CD4-positive, alpha-beta T cell (primary cell): ENCODE measurements at regions of chr17 and their contacts with region 1.

Region 1: GRCh38 chr17:49851387-49852291 is 3.8 kb upstream of the TAC4 start:
- DNase-seq: peak; percentile 61 to 83 (median 69)
- ATAC-seq: peak; percentile 81
- H3K4me3 ChIP-seq: peak overlapping the region; percentile 82
- H3K4me3 Mint-ChIP-seq: peak overlapping the region; percentile 96
- H3K27ac ChIP-seq: peak overlapping the region; percentile 16 to 69
- H3K27ac Mint-ChIP-seq: peak overlapping the region; percentile 89
- H3K4me1 ChIP-seq: peaks cover 18% of the 10 kb centered on the region
- H3K4me1 Mint-ChIP-seq: peaks cover 22% of the 10 kb centered on the region
- H3K27me3 ChIP-seq: no peaks in the 10 kb centered on the region
- H3K27me3 Mint-ChIP-seq: no peaks in the 10 kb centered on the region
- CTCF ChIP-seq: peak; percentile 78

Region 2: DNA sequence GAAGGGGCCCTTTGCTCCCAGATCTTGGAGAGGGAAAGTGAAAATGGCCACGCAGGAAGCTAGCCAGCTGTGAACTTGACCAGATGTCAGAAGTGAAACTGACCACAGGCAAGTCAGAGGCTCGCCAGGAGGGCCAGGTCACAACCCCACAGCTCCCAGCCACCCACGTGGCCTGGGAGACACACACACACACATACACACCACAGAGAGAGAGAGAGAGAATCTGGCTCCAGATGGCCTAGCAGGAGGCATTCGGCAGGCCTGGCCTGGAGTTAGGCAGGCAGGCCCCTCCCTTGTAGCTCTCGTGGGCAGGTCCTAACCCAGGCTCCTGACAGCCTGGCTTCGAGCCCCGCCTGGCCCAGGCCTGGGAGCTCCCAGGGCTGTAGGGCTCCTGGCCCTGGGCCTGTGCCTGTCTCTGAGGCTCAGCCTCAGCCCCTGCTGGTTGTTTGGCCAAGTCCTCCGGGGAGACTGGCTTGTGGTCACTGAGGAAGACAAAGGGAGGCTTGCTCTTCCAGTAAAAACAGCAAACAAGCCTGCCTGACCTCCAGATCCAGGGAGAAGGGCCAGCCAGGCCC is 336.4 kb before region 1 on chr17:
- CTCF ChIA-PET with region 1: no interaction called
- POLR2A ChIA-PET with region 1: no interaction called
- intact Hi-C with region 1: no loop called
- DNase-seq: peak in 2 of 14 experiments; percentile 19 to 32
- ATAC-seq: no peak
- H3K4me3 ChIP-seq: no peak overlapping the region
- H3K4me3 Mint-ChIP-seq: no peak overlapping the region
- H3K27ac ChIP-seq: no peak overlapping the region
- H3K27ac Mint-ChIP-seq: no peak overlapping the region
- H3K4me1 ChIP-seq: peaks cover 3% of the 10 kb centered on the region
- H3K4me1 Mint-ChIP-seq: no peaks in the 10 kb centered on the region
- H3K27me3 ChIP-seq: no peaks in the 10 kb centered on the region
- H3K27me3 Mint-ChIP-seq: peaks cover 8% of the 10 kb centered on the region
- CTCF ChIP-seq: no peak

Region 3: DNA sequence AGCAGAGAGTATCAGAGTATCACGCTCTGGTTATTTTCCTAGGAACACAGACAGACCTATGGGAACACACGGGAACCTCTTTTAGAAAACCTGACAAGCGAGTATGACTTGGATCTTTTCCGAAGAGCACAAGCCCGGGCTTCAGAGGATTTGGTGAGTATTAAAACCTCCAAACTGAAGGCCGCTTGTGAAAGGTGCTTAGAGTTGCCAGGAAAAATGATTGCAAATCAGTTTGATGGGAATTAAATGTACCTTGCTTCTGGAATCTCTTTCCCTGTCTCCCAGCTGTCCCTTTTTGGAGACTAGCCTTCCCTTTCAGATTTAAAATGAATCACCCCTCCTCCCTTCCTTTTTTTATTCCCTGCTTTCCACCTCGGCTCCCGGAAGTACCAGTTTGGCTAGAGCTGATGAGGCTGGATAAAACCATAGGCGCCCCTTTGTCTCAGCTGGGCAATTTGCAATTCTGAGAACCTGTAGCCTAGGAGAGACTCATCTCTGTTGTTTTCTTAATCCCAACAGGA is 35.8 kb before region 1 on chr17:
- CTCF ChIA-PET with region 1: no interaction called
- POLR2A ChIA-PET with region 1: interaction called, 10 read pairs
- intact Hi-C with region 1: loop called in 1 of 2 experiments (anchors 2 kb)
- DNase-seq: no peak
- ATAC-seq: no peak
- H3K4me3 ChIP-seq: no peak overlapping the region
- H3K4me3 Mint-ChIP-seq: no peak overlapping the region
- H3K27ac ChIP-seq: peak overlapping the region in 1 of 2 donors; percentile 43
- H3K27ac Mint-ChIP-seq: peak overlapping the region; percentile 96
- H3K4me1 ChIP-seq: peaks cover 51% of the 10 kb centered on the region
- H3K4me1 Mint-ChIP-seq: peaks cover 73% of the 10 kb centered on the region
- H3K27me3 ChIP-seq: no peaks in the 10 kb centered on the region
- H3K27me3 Mint-ChIP-seq: no peaks in the 10 kb centered on the region
- CTCF ChIP-seq: no peak

Region 4: GRCh38 chr17:49873466-49873865 is 21.8 kb after region 1 on chr17:
- CTCF ChIA-PET with region 1: no interaction called
- POLR2A ChIA-PET with region 1: no interaction called
- intact Hi-C with region 1: no loop called
- DNase-seq: no peak
- ATAC-seq: no peak
- H3K4me3 ChIP-seq: no peak overlapping the region
- H3K4me3 Mint-ChIP-seq: no peak overlapping the region
- H3K27ac ChIP-seq: no peak overlapping the region
- H3K27ac Mint-ChIP-seq: no peak overlapping the region
- H3K4me1 ChIP-seq: peaks cover 18% of the 10 kb centered on the region
- H3K4me1 Mint-ChIP-seq: peaks cover 20% of the 10 kb centered on the region
- H3K27me3 ChIP-seq: peaks cover 0 to 4% of the 10 kb centered on the region in 2 experiments
- H3K27me3 Mint-ChIP-seq: peaks cover 13% of the 10 kb centered on the region
- CTCF ChIP-seq: no peak

Region 5: GRCh38 chr17:49959183-49959935 is 107.7 kb after region 1 on chr17:
- CTCF ChIA-PET with region 1: no interaction called
- POLR2A ChIA-PET with region 1: no interaction called
- intact Hi-C with region 1: no loop called
- DNase-seq: no peak
- ATAC-seq: no peak
- H3K4me3 ChIP-seq: no peak overlapping the region
- H3K4me3 Mint-ChIP-seq: no peak overlapping the region
- H3K27ac ChIP-seq: no peak overlapping the region
- H3K27ac Mint-ChIP-seq: no peak overlapping the region
- H3K4me1 ChIP-seq: peaks cover 18% of the 10 kb centered on the region
- H3K4me1 Mint-ChIP-seq: peaks cover 12% of the 10 kb centered on the region
- H3K27me3 ChIP-seq: peaks cover 29 to 30% of the 10 kb centered on the region in 2 experiments
- H3K27me3 Mint-ChIP-seq: peaks cover 61% of the 10 kb centered on the region
- CTCF ChIP-seq: no peak